H1 (cell line): ENCODE measurements at regions of chr16 and their contacts with region 1.

Region 1: DNA sequence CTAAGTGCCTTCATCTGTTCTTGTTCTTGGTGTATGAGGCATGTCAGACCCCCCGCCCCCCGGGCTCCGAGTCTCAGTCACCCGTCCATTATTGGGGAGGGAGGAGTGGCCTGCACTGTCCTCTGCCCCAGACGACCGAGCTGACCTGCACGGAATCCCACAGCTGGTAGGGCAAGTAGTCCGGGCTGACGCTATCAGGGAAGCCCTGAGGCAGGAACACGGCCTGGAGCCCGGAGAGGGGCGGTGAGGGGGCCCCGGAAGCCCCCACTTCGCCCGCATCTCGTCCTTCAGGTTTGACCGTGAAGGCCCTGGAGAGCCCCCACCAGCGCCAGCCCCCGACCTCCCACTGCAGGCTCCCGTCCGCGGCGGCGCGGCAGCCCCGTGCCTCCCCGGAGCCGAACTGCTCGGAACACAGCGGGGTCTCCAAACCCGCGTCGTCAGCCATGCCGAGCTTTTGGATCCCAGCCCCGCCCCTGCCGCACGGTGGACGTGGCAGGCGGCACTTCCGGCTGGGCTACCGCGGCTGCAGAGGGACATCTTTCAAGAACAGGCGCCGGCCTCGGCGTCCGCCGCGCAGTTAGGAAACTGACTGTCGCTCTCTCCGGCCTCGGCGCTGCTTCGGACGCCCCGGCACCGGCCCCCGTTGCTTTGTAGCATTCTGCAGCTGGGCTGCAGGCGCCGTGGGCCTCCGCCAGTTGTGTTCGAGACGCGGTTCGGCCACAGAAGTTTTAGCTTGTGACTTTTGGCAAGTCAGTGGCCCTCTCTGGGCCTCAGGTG is at the start of gene RUSF1:
- DNase-seq: peak; percentile 68 to 91
- H3K4me3 ChIP-seq: peak within 1 kb of the TSS; percentile 67 to 88 (median 86)
- H3K27ac ChIP-seq: peak within 1 kb of the TSS; percentile 64; the same call in 1 of the 2 replicates
- H3K4me1 ChIP-seq: peaks cover 0 to 4% (median 2%) of the 10 kb centered on the region in 4 experiments; a peak in 3 of 7 replicates
- H3K27me3 ChIP-seq: no peaks in the 10 kb centered on the region
- CTCF ChIP-seq: no peak
- EP300 ChIP-seq: peak in 1 of 2 experiments; percentile 9; a peak in 1 of 3 replicates
- POLR2A ChIP-seq: peak; percentile 70 to 87
- RAD21 ChIP-seq: no peak
- total RNA-seq, gene RUSF1: 20.3 and 22.5 TPM in 2 replicates

Region 2: GRCh38 chr16:31476303-31477219 is 31.6 kb before region 1 on chr16:
- CTCF ChIA-PET with region 1: interaction called, 7 read pairs
- POLR2A ChIA-PET with region 1: interaction called, 10 read pairs
- DNase-seq: peak in 1 of 2 experiments; percentile 86
- H3K4me3 ChIP-seq: peak overlapping the region; percentile 54 to 79 (median 64)
- H3K27ac ChIP-seq: no peak overlapping the region
- H3K4me1 ChIP-seq: peaks cover 0 to 8% (median 3%) of the 10 kb centered on the region in 4 experiments; a peak in 5 of 7 replicates
- H3K27me3 ChIP-seq: peaks cover 2 to 49% (median 35%) of the 10 kb centered on the region in 4 experiments
- CTCF ChIP-seq: no peak
- EP300 ChIP-seq: no peak
- POLR2A ChIP-seq: peak in 1 of 2 experiments; percentile 77; a peak in 2 of 3 replicates
- RAD21 ChIP-seq: no peak

Region 3: DNA sequence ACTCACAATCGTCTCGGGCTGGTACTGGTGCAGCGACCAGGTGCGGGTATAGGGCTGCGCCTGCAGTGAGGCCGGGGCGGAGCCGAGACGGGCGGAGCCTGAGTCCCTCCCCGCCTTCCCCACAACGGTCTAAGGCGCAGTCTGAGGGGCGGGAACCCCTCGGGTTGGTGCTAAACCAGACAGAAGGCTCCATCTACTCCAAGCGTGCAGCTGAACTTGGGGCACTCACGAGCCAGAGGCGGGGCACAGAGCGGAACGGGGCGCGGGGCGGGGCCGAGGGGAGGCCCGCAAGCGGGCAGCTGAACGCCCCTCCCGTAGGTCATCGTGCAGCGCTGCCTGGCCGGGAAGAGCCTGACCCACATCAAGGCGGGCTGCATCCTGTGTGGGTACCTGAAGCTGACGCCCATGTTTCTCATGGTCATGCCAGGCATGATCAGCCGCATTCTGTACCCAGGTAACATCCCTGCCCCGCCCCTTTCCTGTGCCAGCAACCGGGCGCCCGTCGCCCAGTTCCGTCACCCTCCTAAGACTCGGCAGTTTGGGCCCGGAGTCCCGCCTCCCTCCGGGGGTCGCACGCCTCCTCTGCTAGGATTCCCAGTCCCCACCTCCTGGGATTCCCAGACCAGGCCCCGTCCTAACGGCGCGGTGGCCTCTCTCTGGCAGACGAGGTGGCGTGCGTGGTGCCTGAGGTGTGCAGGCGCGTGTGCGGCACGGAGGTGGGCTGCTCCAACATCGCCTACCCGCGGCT is 20.2 kb before region 1 on chr16:
- CTCF ChIA-PET with region 1: interaction called, 3 read pairs
- POLR2A ChIA-PET with region 1: interaction called, 69 read pairs
- DNase-seq: peak in 1 of 2 experiments; percentile 87
- H3K4me3 ChIP-seq: peak overlapping the region; percentile 44 to 64 (median 54)
- H3K27ac ChIP-seq: no peak overlapping the region
- H3K4me1 ChIP-seq: peaks cover 0 to 8% (median 5%) of the 10 kb centered on the region in 4 experiments; a peak in 5 of 7 replicates
- H3K27me3 ChIP-seq: peaks cover 14 to 54% (median 42%) of the 10 kb centered on the region in 4 experiments
- CTCF ChIP-seq: no peak
- EP300 ChIP-seq: no peak
- POLR2A ChIP-seq: peak in 1 of 2 experiments; percentile 5; a peak in 1 of 3 replicates
- RAD21 ChIP-seq: no peak

Region 4: DNA sequence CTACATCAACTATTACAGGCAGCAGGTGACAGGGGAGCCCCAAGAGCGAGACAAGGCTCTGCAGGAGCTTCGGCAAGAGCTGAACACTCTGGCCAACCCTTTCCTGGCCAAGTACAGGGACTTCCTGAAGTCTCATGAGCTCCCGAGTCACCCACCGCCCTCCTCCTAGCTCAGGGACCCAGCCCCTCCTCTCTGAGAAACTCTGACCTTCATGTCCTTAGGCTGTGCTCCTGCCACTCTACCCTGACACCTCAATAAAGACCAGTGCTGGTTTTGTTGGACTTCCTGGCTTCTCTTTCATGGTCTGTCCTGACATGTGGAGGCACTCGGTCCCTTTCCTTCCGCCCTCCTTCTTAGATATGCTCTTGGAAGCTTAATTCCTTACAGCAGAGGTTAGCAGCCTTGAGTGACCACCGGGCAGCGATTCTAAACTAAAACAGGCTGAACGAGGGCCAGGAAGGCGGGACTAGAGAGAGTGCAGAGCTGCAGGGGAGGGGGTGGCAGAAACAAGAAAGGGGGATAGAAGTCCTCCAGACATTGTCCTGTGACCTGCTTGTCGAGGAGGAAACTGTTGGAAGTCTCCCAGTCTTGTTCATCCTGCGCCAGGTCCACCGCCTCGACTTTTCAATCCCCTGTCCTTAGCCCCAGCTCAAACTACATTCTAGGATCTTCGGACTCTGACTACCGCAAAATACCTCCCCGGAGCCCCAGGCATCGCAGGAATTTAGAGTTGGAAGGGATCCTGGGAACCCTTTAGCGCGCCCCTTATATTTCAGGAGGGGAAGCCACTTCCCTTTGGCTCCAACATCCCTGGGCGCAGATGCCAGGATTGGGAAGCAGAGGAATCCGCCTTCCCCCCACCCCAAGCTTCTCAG is 20.6 kb after region 1 on chr16:
- CTCF ChIA-PET with region 1: interaction called, 3 read pairs
- POLR2A ChIA-PET with region 1: interaction called, 27 read pairs
- DNase-seq: peak in 1 of 2 experiments; percentile 54
- H3K4me3 ChIP-seq: peak overlapping the region; percentile 44 to 74 (median 60)
- H3K27ac ChIP-seq: no peak overlapping the region
- H3K4me1 ChIP-seq: peaks cover 6 to 14% (median 8%) of the 10 kb centered on the region in 4 experiments
- H3K27me3 ChIP-seq: peaks cover 5 to 31% (median 25%) of the 10 kb centered on the region in 4 experiments
- CTCF ChIP-seq: no peak
- EP300 ChIP-seq: no peak
- POLR2A ChIP-seq: no peak; a peak in 1 of 3 replicates
- RAD21 ChIP-seq: no peak

Region 5: GRCh38 chr16:31713071-31713944 is 205.2 kb after region 1 on chr16:
- CTCF ChIA-PET with region 1: interaction called, 3 read pairs
- POLR2A ChIA-PET with region 1: interaction called, 13 read pairs
- DNase-seq: peak; percentile 88 to 93
- H3K4me3 ChIP-seq: peak overlapping the region; percentile 77 to 95 (median 92)
- H3K27ac ChIP-seq: peak overlapping the region; percentile 94
- H3K4me1 ChIP-seq: peaks cover 4 to 14% (median 5%) of the 10 kb centered on the region in 4 experiments; a peak in 6 of 7 replicates
- H3K27me3 ChIP-seq: no peaks in the 10 kb centered on the region
- CTCF ChIP-seq: no peak
- EP300 ChIP-seq: no peak
- POLR2A ChIP-seq: peak; percentile 94 to 96
- RAD21 ChIP-seq: no peak